IMR-90 (cell line): ENCODE measurements at regions of chr7 and their contacts with region 1.

Region 1: GRCh38 chr7:64618785-64619456 is 47.0 kb upstream of the ZNF107 start:
- DNase-seq: peak; percentile 60
- ATAC-seq: peak; percentile 66; the same call in 1 of the 2 replicates
- H3K4me3 ChIP-seq: no peak overlapping the region
- H3K27ac ChIP-seq: no peak overlapping the region
- H3K4me1 ChIP-seq: no peaks in the 10 kb centered on the region
- H3K27me3 ChIP-seq: no peaks in the 10 kb centered on the region
- CTCF ChIP-seq: peak; percentile 51
- POLR2A ChIP-seq: no peak
- RAD21 ChIP-seq: peak; percentile 79

Region 2: DNA sequence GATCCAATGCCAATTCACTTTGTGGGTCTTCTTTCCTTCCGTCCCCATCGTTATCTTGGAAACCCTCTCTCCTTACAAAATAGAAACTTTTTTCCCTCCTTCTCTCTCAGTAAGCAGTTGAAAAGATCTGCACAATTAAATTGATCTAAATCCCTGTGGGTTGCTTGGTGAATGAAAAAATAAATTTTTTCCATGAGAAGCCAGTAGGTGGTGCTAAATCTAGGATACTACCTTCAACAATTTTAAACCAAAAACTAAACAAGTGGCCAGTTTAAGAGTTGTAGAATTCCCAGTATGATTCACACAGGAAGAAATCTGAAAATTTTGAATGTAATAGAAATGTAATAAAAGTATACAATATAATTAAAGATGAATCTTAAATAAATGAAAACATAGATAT is 1610.6 kb before region 1 on chr7:
- CTCF ChIA-PET with region 1: no interaction called
- POLR2A ChIA-PET with region 1: no interaction called
- dilution Hi-C with region 1: no loop called
- in situ Hi-C with region 1: no loop called
- intact Hi-C with region 1: loop called (anchors 5 kb)
- DNase-seq: no peak
- ATAC-seq: no peak
- H3K4me3 ChIP-seq: no peak overlapping the region
- H3K27ac ChIP-seq: no peak overlapping the region
- H3K4me1 ChIP-seq: no peaks in the 10 kb centered on the region
- H3K27me3 ChIP-seq: no peaks in the 10 kb centered on the region
- CTCF ChIP-seq: no peak
- POLR2A ChIP-seq: no peak
- RAD21 ChIP-seq: no peak

Region 3: GRCh38 chr7:64832136-64832535 is 213.2 kb after region 1 on chr7:
- CTCF ChIA-PET with region 1: no interaction called
- POLR2A ChIA-PET with region 1: no interaction called
- dilution Hi-C with region 1: no loop called
- in situ Hi-C with region 1: no loop called
- intact Hi-C with region 1: no loop called
- DNase-seq: no peak
- ATAC-seq: no peak
- H3K4me3 ChIP-seq: no peak overlapping the region
- H3K27ac ChIP-seq: no peak overlapping the region
- H3K4me1 ChIP-seq: no peaks in the 10 kb centered on the region
- H3K27me3 ChIP-seq: no peaks in the 10 kb centered on the region
- CTCF ChIP-seq: no peak
- POLR2A ChIP-seq: no peak
- RAD21 ChIP-seq: no peak